Aorta (tissue), 5 donors: ENCODE measurements at regions of chr17 and their contacts with region 1.

Region 1: DNA sequence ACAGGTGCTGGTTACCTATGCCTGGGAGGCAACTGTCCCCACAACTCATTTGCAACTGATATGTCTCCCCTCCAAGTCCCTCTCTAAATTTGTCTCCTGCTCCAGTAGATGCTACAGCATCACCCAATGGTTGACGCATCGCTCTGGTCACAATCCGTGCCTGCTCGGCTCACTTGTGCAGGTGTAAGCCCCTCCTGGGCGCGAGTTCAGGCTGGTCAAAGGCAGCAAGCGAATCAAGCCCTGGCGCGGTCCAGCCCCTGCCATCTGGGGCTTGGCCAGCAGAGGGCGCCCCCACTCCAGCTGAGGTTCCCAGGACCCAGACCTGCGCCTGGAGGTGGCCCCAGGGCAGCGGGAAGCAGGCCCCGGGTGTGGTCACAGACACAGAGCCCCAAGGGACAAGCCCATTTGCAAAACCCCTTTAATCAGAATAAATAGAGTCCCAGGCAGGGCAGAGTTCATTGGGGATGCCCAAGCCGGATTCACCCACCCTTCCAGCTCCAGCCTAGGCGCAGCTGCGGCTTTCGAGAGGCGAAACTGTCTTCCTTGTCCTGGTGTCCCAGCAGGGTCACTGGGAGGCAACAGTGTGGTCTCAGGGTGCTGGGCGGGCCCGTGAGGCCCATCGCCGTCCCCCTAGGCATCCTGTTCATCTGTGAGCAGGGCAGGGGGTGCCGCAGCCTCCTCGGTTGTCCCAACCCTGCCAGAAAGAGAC is 15.9 kb downstream of the TMC6 start:
- DNase-seq: peak; percentile 78 to 92
- ATAC-seq: peak; percentile 83
- H3K4me3 ChIP-seq: no peak overlapping the region
- H3K27ac ChIP-seq: no peak overlapping the region
- H3K4me1 ChIP-seq: no peaks in the 10 kb centered on the region
- H3K27me3 ChIP-seq: no peaks in the 10 kb centered on the region

Region 2: DNA sequence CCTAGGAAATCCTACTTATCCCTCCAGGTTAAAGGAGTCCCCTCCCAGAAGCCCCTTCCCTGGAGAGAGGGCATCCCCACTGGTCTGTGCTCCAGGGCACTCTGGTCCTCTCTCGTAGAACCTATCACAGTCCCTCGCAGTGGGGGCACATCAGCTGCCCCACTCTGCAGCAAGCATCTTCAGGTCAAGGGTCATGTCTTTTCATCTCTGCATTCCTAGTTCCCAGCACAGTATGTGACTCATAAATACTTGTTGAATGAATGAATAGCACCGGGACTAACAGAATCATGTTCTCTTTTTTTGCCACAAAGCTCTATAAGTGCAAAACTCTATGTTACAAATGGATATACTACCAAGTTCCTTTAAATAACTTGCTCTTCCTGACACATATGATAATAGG is 1908.4 kb before region 1 on chr17:
- intact Hi-C with region 1: no loop called
- DNase-seq: no peak
- ATAC-seq: no peak
- H3K4me3 ChIP-seq: no peak overlapping the region
- H3K27ac ChIP-seq: no peak overlapping the region
- H3K4me1 ChIP-seq: no peaks in the 10 kb centered on the region
- H3K27me3 ChIP-seq: no peaks in the 10 kb centered on the region

Region 3: DNA sequence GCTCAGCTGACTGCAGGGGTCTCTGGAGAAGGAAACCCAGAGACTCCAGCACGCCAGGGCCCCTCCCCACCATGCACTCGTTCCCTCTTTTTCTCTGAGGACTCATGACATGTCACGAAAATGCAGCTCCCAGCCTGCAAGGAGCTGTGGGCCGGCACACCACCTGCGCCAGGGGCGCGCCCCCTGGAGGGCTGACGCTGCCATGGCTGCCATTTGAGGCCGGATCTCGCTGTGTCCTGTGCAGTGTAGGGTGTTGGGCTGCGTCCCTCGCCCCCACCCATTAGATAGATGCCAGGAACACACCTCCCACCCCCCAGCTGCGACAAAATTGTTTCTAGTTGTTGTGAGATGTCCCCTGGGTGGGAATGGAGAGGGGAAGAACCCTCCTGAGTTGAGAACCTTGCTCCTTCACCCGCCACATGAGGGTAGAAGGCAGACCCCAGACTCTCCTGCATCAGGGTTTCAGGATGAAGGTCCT is 63.9 kb after region 1 on chr17:
- intact Hi-C with region 1: loop called (anchors 5 kb)
- DNase-seq: peak; percentile 85 to 91
- ATAC-seq: no peak
- H3K4me3 ChIP-seq: no peak overlapping the region
- H3K27ac ChIP-seq: peak overlapping the region in 1 of 2 donors; percentile 42
- H3K4me1 ChIP-seq: peaks cover 2 to 4% of the 10 kb centered on the region in 2 donors
- H3K27me3 ChIP-seq: no peaks in the 10 kb centered on the region

Region 4: GRCh38 chr17:78250891-78251794 is 138.5 kb after region 1 on chr17:
- intact Hi-C with region 1: loop called (anchors 1 to 5 kb)
- DNase-seq: peak; percentile 90 to 95
- ATAC-seq: peak; percentile 90
- H3K4me3 ChIP-seq: no peak overlapping the region
- H3K27ac ChIP-seq: no peak overlapping the region
- H3K4me1 ChIP-seq: no peaks in the 10 kb centered on the region
- H3K27me3 ChIP-seq: no peaks in the 10 kb centered on the region

Region 5: GRCh38 chr17:78365561-78366108 is 253.0 kb after region 1 on chr17:
- intact Hi-C with region 1: no loop called
- DNase-seq: no peak
- ATAC-seq: no peak
- H3K4me3 ChIP-seq: no peak overlapping the region
- H3K27ac ChIP-seq: no peak overlapping the region
- H3K4me1 ChIP-seq: no peaks in the 10 kb centered on the region
- H3K27me3 ChIP-seq: no peaks in the 10 kb centered on the region

Region 6: GRCh38 chr17:78397681-78398101 is 285.0 kb after region 1 on chr17:
- intact Hi-C with region 1: no loop called
- DNase-seq: peak; percentile 77 to 86
- ATAC-seq: peak; percentile 82
- H3K4me3 ChIP-seq: no peak overlapping the region
- H3K27ac ChIP-seq: peak overlapping the region in 1 of 2 donors; percentile 96
- H3K4me1 ChIP-seq: peaks cover 2 to 4% of the 10 kb centered on the region in 2 donors
- H3K27me3 ChIP-seq: no peaks in the 10 kb centered on the region